ENCODE measurements at regions of chr1 and their contacts with region 1.

Region 1: DNA sequence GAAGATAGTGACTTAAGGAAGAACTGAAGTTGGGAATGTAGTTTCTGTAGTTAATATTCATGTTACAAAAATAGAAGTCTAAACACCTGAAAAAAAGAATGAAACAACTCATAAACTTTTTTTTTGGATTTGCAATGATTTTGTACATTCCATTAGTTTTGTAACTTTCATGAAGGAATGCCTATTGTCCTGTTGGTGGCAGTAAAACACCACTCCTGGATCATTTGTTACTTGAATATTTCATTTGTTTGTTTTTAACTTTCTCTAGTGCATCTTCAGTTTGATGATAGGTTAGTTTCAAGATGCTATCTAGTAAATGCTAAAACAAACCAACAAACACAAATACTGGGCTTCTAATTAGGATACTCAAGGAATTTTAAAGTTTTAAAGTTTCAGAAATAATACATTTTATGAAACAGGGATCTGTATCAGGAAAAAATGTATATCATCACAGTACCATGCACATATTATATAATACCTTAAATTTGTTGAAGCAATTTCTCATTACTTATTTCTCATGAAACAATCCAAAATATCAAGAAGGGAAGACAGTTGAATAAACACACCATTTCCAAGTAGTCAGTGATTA is 229.7 kb upstream of the CACYBP start:
- DNase-seq: peak in 2 of 7 donors; percentile 13 to 35
- H3K4me3 ChIP-seq: no peak overlapping the region
- H3K27ac ChIP-seq: no peak overlapping the region
- H3K4me1 ChIP-seq: peaks cover 0 to 4% of the 10 kb centered on the region in 2 donors
- H3K27me3 ChIP-seq: no peaks in the 10 kb centered on the region
- CTCF ChIP-seq: peak; percentile 62 to 89 (median 78)
- POLR2A ChIP-seq: no peak

Region 2: DNA sequence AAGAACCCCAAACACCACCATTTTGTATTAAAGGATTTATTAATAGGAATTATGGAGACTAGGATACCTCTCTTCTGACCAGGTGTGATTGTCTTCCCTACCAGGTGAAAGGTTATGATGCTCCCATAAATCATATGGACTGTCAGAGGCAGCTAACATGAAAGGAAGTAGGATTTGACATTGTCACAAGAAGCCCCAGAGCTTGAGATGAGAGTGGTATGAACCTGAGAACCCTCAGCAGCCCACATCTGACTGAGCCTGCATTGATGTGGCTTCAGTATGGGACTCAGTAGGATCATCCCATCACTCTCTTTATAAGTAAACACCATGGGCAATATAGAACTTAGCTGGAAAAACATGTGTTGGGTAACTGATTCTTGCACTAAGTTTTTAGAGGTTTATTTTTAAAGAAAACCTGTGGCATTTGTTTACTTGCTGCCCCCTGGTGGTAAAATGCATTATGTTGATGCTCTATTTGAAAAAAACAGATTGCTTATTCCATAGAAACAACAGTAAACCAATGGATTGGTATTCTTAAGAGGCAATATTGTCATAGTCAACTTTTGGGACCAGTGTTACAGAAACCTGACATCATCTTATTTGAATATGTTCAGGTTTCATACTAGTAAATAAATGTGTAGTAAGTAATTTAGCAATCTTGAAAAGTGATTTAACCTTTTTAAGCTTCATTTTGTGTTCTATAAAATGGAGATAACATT is 213.1 kb after region 1 on chr1:
- intact Hi-C with region 1: loop called in 1 of 2 experiments (anchors 10 kb)
- DNase-seq: peak in 3 of 7 donors; percentile 18 to 58 (median 49)
- H3K4me3 ChIP-seq: no peak overlapping the region
- H3K27ac ChIP-seq: no peak overlapping the region
- H3K4me1 ChIP-seq: no peaks in the 10 kb centered on the region
- H3K27me3 ChIP-seq: no peaks in the 10 kb centered on the region
- CTCF ChIP-seq: peak; percentile 48 to 74 (median 62)
- POLR2A ChIP-seq: no peak

Region 3: GRCh38 chr1:175129997-175130648 is 360.1 kb after region 1 on chr1:
- intact Hi-C with region 1: loop called in 1 of 2 experiments (anchors 5 kb)
- DNase-seq: peak in 2 of 7 donors; percentile 18 to 33
- H3K4me3 ChIP-seq: no peak overlapping the region
- H3K27ac ChIP-seq: no peak overlapping the region
- H3K4me1 ChIP-seq: no peaks in the 10 kb centered on the region
- H3K27me3 ChIP-seq: no peaks in the 10 kb centered on the region
- CTCF ChIP-seq: no peak
- POLR2A ChIP-seq: no peak